Motor neuron (in vitro differentiated cells): ENCODE measurements at regions of chr1 and their contacts with region 1.

Region 1: DNA sequence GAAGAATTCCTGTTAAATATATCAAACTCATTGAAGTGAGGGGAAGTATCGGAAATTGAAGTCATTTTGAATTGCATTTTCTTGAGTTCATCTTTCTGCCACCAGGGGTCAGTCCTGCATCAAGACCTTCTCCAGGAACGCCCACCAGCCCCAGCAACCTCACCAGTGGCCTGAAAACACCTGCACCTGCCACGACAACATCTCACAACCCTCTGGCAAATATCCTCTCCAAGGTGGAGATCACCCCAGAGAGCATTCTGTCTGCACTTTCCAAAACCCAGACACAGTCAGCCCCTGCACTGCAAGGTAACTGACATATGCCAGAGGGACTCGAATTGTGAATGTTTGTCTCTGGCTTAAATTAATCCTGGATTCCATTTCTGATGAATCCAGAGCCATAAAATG is 22.8 kb upstream of the TARS2 start:
- ATAC-seq: peak in 4 of 8 experiments; percentile 9 to 52 (median 38)
- H3K4me3 ChIP-seq: no peak overlapping the region
- H3K27ac ChIP-seq: no peak overlapping the region
- H3K4me1 ChIP-seq: no peaks in the 10 kb centered on the region

Region 2: DNA sequence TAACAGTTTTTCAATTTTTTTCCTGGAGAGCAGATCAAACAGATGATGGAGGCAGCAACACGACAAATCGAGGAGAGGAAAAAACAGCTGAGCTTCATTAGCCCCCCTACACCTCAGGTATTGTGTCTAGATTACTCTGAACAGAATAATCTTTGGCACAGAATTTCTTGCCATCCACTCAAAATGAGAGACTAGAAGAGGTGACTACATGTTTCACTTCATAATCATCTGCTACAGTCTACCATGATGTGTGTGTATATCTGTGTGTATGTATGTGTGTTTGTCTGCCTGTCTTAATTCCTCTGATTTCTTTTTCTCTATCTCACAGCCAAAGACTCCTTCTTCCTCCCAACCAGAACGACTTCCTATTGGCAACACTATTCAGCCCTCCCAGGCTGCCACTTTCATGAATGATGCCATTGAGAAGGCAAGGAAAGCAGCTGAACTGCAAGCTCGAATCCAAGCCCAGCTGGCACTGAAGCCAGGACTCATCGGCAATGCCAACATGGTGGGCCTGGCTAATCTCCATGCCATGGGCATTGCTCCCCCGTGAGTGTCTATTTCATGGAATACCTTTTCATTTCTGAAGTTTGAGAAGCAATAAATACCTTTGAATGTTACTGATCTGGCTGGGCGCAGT is 131.7 kb before region 1 on chr1:
- in situ Hi-C with region 1: no loop called
- ATAC-seq: no peak
- H3K4me3 ChIP-seq: no peak overlapping the region
- H3K27ac ChIP-seq: no peak overlapping the region
- H3K4me1 ChIP-seq: no peaks in the 10 kb centered on the region

Region 3: DNA sequence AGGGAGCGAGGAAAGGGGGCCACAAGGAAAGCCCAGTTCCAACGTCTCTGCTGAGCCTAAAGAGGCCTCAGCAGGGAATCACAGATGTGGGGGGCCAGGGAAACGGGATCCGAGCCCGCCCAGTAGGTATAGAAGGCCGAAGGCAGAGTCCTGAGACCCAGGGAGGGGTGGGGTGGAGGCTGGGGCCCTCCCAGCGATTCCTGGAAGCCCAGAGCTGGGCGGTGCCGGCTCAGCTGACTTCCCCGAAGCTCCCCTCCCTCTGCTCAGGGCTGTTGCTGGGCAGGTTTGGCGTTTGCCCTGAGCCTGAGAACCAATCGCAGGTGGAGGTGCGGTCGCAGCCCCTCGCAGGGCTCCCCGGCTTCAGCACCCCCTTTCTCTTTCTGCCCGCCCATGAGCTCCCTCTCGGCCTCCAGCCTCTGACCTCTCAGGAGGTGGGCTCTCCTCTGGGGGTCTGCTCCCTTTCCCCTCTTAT is 97.6 kb after region 1 on chr1:
- in situ Hi-C with region 1: loop called in 1 of 9 experiments (anchors 25 kb)
- ATAC-seq: peak; percentile 17 to 70 (median 56)
- H3K4me3 ChIP-seq: peak overlapping the region; percentile 23 to 42 (median 31)
- H3K27ac ChIP-seq: peak overlapping the region; percentile 82 to 90
- H3K4me1 ChIP-seq: peaks cover 19 to 29% of the 10 kb centered on the region in 2 donors